CD4-positive, alpha-beta T cell (primary cell): ENCODE measurements at regions of chr11 and their contacts with region 1.

Region 1: GRCh38 chr11:102375720-102376399 is 28.8 kb downstream of the BIRC2 start:
- DNase-seq: no peak
- ATAC-seq: no peak
- H3K4me3 ChIP-seq: no peak overlapping the region
- H3K4me3 Mint-ChIP-seq: no peak overlapping the region
- H3K27ac ChIP-seq: no peak overlapping the region
- H3K27ac Mint-ChIP-seq: no peak overlapping the region
- H3K4me1 ChIP-seq: peaks cover 8% of the 10 kb centered on the region
- H3K4me1 Mint-ChIP-seq: peaks cover 23% of the 10 kb centered on the region
- H3K27me3 ChIP-seq: no peaks in the 10 kb centered on the region
- H3K27me3 Mint-ChIP-seq: no peaks in the 10 kb centered on the region
- CTCF ChIP-seq: no peak

Region 2: DNA sequence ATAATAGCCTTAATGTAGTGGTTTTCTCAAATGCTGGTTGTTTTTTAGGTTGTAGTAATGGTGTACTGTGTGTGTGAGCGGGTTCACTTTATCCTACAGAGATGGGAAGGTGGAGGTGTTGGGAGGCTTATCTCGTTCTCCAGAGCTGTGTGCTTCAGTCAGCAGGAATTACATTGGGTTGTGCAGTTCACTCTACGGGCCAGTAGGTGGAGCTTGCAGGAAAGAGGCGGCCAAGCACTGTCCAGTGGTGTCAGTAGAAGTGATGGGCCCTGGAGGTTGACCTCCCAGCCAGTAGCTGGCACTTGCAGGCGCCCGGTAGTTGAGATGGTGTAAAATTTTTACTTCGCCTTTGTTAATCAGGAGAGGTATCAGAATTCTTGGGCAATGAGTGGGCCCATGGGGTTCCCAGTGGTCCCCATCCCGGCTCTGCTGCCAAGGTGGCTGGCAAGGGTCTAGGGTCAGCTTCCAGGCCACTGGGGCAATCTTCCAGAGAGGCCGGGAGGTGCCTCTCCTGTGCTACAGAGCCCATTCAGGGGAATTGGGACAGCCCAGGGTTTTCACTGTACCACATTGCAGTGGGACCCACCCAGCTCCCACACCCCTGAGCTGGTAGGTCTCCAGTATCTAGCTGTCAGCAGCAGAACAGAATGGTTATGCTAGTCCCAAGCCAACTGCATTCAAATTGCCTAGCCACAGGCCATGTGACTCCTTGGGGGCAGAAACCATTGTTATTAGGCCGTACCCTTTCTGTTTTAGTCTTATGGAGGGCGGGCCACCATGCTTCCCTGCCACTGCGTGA is 15.0 kb after region 1 on chr11:
- CTCF ChIA-PET with region 1: interaction called, 4 read pairs
- POLR2A ChIA-PET with region 1: no interaction called
- intact Hi-C with region 1: loop called in 1 of 2 experiments (anchors 1 kb)
- DNase-seq: peak in 13 of 14 experiments; percentile 32 to 79 (median 45)
- ATAC-seq: peak; percentile 76
- H3K4me3 ChIP-seq: no peak overlapping the region
- H3K4me3 Mint-ChIP-seq: no peak overlapping the region
- H3K27ac ChIP-seq: peak overlapping the region in 1 of 2 donors; percentile 7
- H3K27ac Mint-ChIP-seq: peak overlapping the region; percentile 37
- H3K4me1 ChIP-seq: peaks cover 23% of the 10 kb centered on the region
- H3K4me1 Mint-ChIP-seq: peaks cover 52% of the 10 kb centered on the region
- H3K27me3 ChIP-seq: no peaks in the 10 kb centered on the region
- H3K27me3 Mint-ChIP-seq: no peaks in the 10 kb centered on the region
- CTCF ChIP-seq: peak; percentile 90

Region 3: GRCh38 chr11:102485095-102485722 is 109.3 kb after region 1 on chr11:
- CTCF ChIA-PET with region 1: no interaction called
- POLR2A ChIA-PET with region 1: no interaction called
- intact Hi-C with region 1: no loop called
- DNase-seq: no peak
- ATAC-seq: no peak
- H3K4me3 ChIP-seq: no peak overlapping the region
- H3K4me3 Mint-ChIP-seq: no peak overlapping the region
- H3K27ac ChIP-seq: no peak overlapping the region
- H3K27ac Mint-ChIP-seq: no peak overlapping the region
- H3K4me1 ChIP-seq: no peaks in the 10 kb centered on the region
- H3K4me1 Mint-ChIP-seq: no peaks in the 10 kb centered on the region
- H3K27me3 ChIP-seq: no peaks in the 10 kb centered on the region
- H3K27me3 Mint-ChIP-seq: no peaks in the 10 kb centered on the region
- CTCF ChIP-seq: no peak